Astrocyte of the cerebellum (primary cell): ENCODE measurements at regions of chr5 and their contacts with region 1.

Region 1: GRCh38 chr5:115304496-115304895 is 8.0 kb upstream of the CCDC112 start:
- DNase-seq: no peak
- H3K4me3 ChIP-seq: no peak overlapping the region
- CTCF ChIP-seq: no peak

Region 2: GRCh38 chr5:115377468-115378217 is 73.1 kb after region 1 on chr5:
- in situ Hi-C with region 1: loop called (anchors 5 kb)
- DNase-seq: peak; percentile 55
- H3K4me3 ChIP-seq: no peak overlapping the region
- CTCF ChIP-seq: peak; percentile 46